Activated CD4-positive, alpha-beta memory T cell treated with anti-CD3 and anti-CD28 coated beads, Interleukin-2, amount 10 ng/mL, durations not matched to agents 7 days and 5 days (primary cell): ENCODE measurements at regions of chr4 and their contacts with region 1.

Region 1: GRCh38 chr4:168917138-168917779 is 92.8 kb downstream of the CBR4 start:
- DNase-seq: no peak
- H3K4me3 Mint-ChIP-seq: no peak overlapping the region
- H3K27ac Mint-ChIP-seq: no peak overlapping the region
- H3K4me1 Mint-ChIP-seq: no peaks in the 10 kb centered on the region
- H3K27me3 Mint-ChIP-seq: no peaks in the 10 kb centered on the region

Region 2: GRCh38 chr4:168585168-168586091 is 331.8 kb before region 1 on chr4:
- CTCF ChIA-PET with region 1: interaction called, 10 read pairs
- POLR2A ChIA-PET with region 1: no interaction called
- DNase-seq: peak; percentile 18
- H3K4me3 Mint-ChIP-seq: no peak overlapping the region
- H3K27ac Mint-ChIP-seq: no peak overlapping the region
- H3K4me1 Mint-ChIP-seq: no peaks in the 10 kb centered on the region
- H3K27me3 Mint-ChIP-seq: peaks cover 15% of the 10 kb centered on the region

Region 3: GRCh38 chr4:168888715-168889215 is 28.5 kb before region 1 on chr4:
- CTCF ChIA-PET with region 1: no interaction called
- POLR2A ChIA-PET with region 1: no interaction called
- DNase-seq: no peak
- H3K4me3 Mint-ChIP-seq: no peak overlapping the region
- H3K27ac Mint-ChIP-seq: no peak overlapping the region
- H3K4me1 Mint-ChIP-seq: no peaks in the 10 kb centered on the region
- H3K27me3 Mint-ChIP-seq: no peaks in the 10 kb centered on the region

Region 4: GRCh38 chr4:168930413-168931181 is 13.3 kb after region 1 on chr4:
- CTCF ChIA-PET with region 1: interaction called, 16 read pairs
- POLR2A ChIA-PET with region 1: no interaction called
- DNase-seq: no peak
- H3K4me3 Mint-ChIP-seq: no peak overlapping the region
- H3K27ac Mint-ChIP-seq: no peak overlapping the region
- H3K4me1 Mint-ChIP-seq: peaks cover 2% of the 10 kb centered on the region
- H3K27me3 Mint-ChIP-seq: no peaks in the 10 kb centered on the region